ENCODE measurements at regions of chr17 and their contacts with region 1.

Region 1: GRCh38 chr17:79053251-79053925 is 21.2 kb upstream of the ENGASE start:
- DNase-seq: no peak
- H3K4me3 ChIP-seq: no peak overlapping the region
- H3K27ac ChIP-seq: no peak overlapping the region
- H3K4me1 ChIP-seq: no peaks in the 10 kb centered on the region
- H3K27me3 ChIP-seq: no peaks in the 10 kb centered on the region
- CTCF ChIP-seq: no peak
- EP300 ChIP-seq: no peak
- POLR2A ChIP-seq: no peak

Region 2: GRCh38 chr17:78058001-78058400 is 995.4 kb before region 1 on chr17:
- in situ Hi-C with region 1: no loop called
- intact Hi-C with region 1: loop called (anchors 10 kb)
- DNase-seq: no peak
- H3K4me3 ChIP-seq: no peak overlapping the region
- H3K27ac ChIP-seq: no peak overlapping the region
- H3K4me1 ChIP-seq: peaks cover 0 to 19% (median 6%) of the 10 kb centered on the region in 4 donors
- H3K27me3 ChIP-seq: no peaks in the 10 kb centered on the region
- CTCF ChIP-seq: no peak
- EP300 ChIP-seq: no peak
- POLR2A ChIP-seq: no peak

Region 3: DNA sequence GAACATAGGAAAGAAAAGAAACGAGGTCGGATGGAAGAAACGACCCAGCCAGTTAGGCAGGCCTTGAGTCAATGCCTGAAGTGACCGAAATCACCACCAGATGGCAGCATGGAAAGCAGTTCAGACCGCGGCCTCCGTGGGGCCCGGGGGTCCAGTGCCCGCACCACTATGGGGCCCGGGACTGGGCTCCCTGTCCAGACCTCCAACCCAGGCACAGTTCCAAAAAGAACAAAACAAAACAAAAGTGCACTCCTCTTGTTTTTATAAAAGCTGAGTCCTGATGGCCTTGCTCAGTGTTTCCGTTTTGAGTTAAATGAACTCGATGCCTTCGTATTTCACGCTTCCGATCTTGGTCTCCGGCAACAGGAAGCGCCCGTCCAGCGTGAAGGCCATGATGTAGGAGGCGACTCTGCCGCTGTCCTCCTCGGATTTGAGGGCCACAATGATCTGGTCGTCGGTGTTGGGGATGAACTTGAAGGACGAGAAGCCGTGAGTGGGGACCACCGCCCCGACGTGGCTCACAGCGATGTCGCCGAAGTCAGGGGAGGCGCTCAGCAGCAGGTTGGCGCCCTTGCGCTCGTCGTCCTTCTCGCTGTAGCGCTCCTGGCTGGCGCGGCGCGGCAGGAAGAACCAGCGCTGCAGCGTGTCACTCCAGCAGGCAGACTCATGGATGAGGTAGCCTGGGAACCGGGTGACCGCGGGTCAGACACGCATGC is 60.0 kb before region 1 on chr17:
- in situ Hi-C with region 1: no loop called
- intact Hi-C with region 1: no loop called
- DNase-seq: peak; percentile 60
- H3K4me3 ChIP-seq: no peak overlapping the region
- H3K27ac ChIP-seq: peak overlapping the region in 3 of 4 donors; percentile 81 to 89 (median 83)
- H3K4me1 ChIP-seq: peaks cover 6 to 59% (median 50%) of the 10 kb centered on the region in 4 donors
- H3K27me3 ChIP-seq: no peaks in the 10 kb centered on the region
- CTCF ChIP-seq: peak; percentile 77 to 89 (median 79)
- EP300 ChIP-seq: no peak
- POLR2A ChIP-seq: no peak

Measured in transverse colon (tissue), 4 donors.